Ovary (tissue), 10 donors: ENCODE measurements at regions of chr18 and their contacts with region 1.

Region 1: DNA sequence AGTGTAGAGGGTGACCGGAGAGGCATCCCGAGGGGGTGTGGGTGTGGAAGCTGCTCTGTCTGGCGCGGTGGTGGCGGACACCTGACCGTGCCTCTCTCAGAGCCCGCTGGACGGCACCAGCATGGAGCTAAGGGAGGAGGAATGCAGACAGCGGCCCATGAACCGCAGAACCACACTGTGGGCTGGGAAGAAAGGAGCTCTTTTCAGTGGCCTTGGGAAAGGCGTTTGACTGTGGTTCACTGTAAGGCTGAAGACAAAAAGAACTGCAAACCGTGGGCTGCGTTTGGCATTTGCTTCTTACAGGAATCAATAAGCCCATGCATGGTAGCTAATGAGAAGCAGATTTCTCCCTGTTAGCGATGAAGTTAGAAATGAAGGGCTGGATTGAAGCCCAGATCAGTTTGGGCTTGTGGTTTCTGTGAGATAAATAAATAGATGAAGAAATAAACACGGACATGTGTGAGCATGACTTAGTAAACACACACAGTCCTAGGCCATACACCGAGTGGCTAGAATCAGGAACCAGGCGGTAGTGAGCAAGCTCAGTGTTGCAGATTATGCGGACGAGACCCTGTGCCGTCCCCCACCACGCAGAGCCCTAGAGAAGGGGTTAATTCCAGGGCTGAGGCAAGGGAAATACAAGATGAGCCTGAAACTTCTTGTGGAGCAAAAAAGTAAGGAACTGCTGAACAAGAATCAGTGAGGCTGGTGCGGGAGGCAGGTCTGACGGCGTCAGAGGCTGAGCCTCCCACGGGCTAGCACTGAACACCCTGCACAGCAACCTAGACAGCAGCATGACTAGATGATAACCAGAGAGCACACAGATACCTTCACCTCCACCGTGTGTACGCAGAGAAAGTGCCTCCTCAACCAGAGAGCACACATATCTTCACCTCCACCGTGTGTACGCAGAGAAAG is 29.3 kb upstream of the NFATC1 start:
- DNase-seq: no peak
- H3K4me3 ChIP-seq: no peak overlapping the region
- H3K27ac ChIP-seq: no peak overlapping the region
- H3K4me1 ChIP-seq: peaks cover 12% of the 10 kb centered on the region
- H3K27me3 ChIP-seq: no peaks in the 10 kb centered on the region
- CTCF ChIP-seq: no peak
- EP300 ChIP-seq: no peak
- POLR2A ChIP-seq: no peak

Region 2: DNA sequence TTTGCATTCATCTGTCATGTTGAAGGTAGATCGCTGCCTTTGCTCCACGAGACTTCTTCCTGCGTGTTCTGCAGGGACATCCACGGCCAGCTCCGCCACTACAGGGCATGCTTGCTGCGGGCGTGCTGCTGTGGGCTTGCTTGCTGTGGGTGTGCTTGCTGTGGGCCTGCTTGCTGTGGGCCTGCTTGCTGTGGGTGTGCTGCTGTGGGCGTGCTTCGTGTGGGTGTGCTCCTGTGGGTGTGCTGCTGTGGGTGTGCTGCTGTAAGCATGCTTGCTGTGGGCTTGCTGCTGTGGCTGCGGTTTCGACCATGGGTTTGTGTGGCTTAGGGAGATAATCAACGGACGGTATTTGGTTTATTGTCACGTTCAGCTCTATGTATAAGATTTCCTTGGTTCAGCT is 132.0 kb before region 1 on chr18:
- intact Hi-C with region 1: no loop called
- DNase-seq: no peak
- H3K4me3 ChIP-seq: no peak overlapping the region
- H3K27ac ChIP-seq: no peak overlapping the region
- H3K4me1 ChIP-seq: no peaks in the 10 kb centered on the region
- H3K27me3 ChIP-seq: no peaks in the 10 kb centered on the region
- CTCF ChIP-seq: no peak
- EP300 ChIP-seq: no peak
- POLR2A ChIP-seq: no peak

Region 3: GRCh38 chr18:79393635-79394533 is 27.4 kb after region 1 on chr18:
- intact Hi-C with region 1: no loop called
- DNase-seq: peak; percentile 88 to 96 (median 96)
- H3K4me3 ChIP-seq: peak overlapping the region; percentile 56
- H3K27ac ChIP-seq: peak overlapping the region; percentile 77 to 92
- H3K4me1 ChIP-seq: peaks cover 5% of the 10 kb centered on the region
- H3K27me3 ChIP-seq: no peaks in the 10 kb centered on the region
- CTCF ChIP-seq: no peak
- EP300 ChIP-seq: no peak
- POLR2A ChIP-seq: peak; percentile 49

Region 4: GRCh38 chr18:79856119-79857007 is 489.9 kb after region 1 on chr18:
- intact Hi-C with region 1: loop called in 1 of 4 experiments (anchors 10 kb)
- DNase-seq: no peak
- H3K4me3 ChIP-seq: no peak overlapping the region
- H3K27ac ChIP-seq: no peak overlapping the region
- H3K4me1 ChIP-seq: no peaks in the 10 kb centered on the region
- H3K27me3 ChIP-seq: no peaks in the 10 kb centered on the region
- CTCF ChIP-seq: no peak
- EP300 ChIP-seq: no peak
- POLR2A ChIP-seq: no peak